Cardiac septum (tissue), 1 donor: ENCODE measurements at regions of chr5 and their contacts with region 1.

Region 1: DNA sequence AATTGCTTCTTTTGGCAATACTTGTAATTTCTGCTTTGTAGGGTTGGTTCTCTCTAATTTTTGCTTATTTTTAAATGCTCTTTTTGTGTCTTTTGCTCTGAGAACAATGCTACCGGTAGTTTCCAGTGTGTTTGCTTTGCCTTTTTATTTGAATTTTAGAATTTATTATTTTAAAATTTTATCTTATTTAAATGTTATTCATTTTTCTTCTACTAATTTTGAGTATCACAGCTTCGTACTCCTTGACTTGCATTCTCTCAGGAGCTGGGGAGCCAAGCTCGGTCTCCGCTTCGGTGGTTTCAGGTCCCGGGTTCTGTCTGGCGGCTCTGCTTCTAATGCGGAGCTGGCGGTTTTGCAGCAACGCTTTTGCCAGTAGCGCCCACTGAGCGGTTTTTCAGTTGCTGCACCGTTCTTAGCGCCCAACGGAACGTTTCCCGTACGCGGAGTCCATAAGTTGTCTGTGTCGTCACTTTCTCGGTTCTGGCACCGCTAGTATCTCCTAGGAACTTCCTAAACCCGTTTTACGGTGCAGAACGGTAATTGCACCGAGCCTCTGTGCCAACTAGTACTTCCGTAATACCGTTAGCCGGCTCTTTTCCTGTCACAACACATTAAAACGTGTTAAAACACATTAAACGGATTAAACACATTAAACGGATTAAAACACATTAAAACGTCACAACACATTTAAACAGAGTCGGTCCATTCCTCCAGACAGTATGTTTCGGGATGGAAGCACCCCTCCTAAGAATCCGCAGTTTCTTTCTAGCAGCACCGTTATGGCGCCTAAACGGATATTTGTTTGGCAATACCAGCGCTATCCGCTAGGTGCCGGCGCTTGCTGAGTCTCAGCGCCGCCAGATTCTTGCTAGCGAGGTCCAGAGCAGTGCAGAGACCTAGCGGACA is 45.6 kb downstream of the ANXA2R start:
- DNase-seq: peak; percentile 94

Region 2: GRCh38 chr5:42791151-42791550 is 203.3 kb before region 1 on chr5:
- intact Hi-C with region 1: no loop called
- DNase-seq: no peak

Region 3: GRCh38 chr5:42840269-42840668 is 154.2 kb before region 1 on chr5:
- intact Hi-C with region 1: no loop called
- DNase-seq: no peak

Region 4: DNA sequence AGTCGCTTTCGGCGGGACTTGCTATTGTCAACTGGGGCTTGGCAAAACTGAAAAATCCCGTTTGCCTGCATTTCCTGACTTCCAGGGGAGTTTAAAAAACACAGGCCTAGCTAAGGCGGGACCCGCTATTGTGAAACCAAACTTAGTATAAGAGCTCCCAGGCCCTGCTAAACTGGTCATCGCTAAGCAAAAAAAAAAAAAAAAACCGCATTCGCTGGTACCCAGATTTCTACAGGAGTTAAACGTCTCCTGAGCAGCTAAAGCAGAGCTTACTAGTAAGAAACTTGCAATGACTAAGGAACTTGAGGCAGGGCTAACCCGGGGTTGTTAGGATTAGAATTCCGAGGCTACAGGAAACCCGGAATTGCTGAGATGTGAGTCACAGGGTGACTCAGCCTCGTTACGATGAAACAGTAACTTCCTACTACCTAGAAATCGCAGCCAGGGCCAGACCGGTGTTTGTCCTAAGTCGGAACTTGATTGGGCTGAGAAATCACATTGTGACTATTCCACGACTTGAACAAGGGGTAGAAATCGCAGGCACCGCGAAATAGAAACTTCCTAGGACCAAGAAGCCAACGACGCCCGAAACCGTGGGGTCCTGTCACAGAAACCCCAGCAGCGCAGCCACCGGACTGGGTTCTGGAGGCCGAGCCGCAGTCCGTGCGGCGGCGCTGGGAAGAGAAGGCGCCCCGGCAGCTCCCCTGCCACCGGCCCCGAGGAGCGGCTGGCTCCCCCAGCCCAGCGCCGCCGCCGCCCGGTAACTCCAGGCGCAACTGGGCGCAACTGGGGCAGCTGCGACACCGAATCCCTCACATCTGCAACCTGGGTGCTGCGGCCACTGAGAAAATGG is 43.8 kb before region 1 on chr5:
- intact Hi-C with region 1: loop called (anchors 1 kb)
- DNase-seq: peak; percentile 88

Region 5: GRCh38 chr5:42962124-42962523 is 32.4 kb before region 1 on chr5:
- intact Hi-C with region 1: no loop called
- DNase-seq: no peak

Region 6: DNA sequence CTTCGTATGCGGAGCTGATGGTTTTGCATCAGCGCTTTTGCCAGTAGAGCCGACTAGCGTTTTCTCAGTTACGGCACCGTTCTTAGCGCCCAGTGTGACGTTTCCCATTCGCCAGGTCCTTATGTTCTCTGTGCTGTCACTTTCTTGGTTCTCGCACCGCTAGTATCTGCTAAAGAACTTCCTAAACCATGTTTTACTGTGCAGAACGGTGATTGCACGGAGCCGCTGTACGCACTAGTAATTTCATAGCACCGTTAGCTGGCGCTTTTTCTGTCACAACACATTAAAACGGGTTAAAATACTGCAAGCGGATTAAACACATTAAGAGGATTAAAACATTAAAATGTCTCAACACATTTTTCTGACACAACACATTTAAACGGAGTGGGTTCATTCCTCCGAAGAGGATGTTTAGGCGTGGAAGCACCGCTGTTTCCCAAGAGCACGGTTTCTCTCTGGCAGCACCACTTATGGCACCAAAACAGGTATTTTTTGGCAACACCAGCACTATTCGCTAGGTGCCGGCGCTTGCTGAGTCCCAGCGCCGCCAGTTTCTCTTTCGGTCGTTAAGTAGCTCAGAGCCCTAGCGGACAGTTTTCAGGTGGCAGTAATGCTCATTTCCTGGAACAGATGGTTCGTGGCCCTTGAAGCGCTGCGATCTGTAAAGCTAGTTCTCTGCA is 25.3 kb after region 1 on chr5:
- intact Hi-C with region 1: loop called (anchors 2 kb)
- DNase-seq: no peak

Region 7: GRCh38 chr5:43066799-43067741 is 72.6 kb after region 1 on chr5:
- intact Hi-C with region 1: loop called (anchors 1 kb)
- DNase-seq: peak; percentile 95

Region 8: DNA sequence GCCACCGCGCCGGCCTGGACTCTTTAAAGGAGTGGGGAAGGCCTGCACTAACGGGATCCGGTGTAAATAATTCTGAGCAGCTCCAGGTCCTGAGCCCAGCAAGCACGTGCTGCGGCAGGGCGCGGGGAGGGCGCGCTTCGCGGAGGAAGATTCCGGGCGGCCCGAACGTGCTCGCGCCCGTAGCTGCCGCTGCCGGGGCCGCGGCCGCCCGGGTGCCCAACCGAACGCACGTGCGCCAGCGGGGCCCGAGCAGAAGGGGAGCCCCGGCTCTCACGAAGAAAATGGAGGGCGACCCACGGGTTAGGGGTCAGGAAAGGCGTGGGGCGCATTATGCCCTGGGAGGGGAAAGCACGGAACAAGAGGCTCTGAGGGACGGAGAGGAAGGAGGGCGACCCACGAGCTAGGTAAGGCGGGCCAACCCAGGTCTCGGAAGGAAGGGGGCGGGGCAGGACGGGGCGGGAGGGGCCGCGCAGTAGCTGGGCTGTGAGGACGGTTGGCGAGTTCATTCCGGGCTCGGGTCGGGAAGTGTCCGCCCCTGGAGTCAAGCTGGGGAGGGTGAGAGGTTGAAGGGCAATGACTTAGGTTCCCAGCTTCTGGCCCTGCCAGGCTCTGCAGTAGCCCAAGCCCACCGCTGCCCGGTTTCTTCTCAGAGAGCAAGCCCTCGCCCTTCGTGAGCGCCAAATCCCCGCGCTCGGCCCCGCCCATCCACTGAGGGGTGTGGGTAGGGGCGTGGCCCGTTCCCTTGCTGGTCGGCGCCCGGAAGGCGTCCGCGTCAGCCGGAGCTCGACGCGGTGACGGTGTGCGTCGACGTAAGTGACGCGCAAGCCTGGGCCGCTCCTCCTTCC is 126.4 kb after region 1 on chr5 and contains the start of gene ZNF131:
- intact Hi-C with region 1: loop called (anchors 5 kb)
- DNase-seq: peak; percentile 98
- total RNA-seq, gene ZNF131: 16.3 TPM